Calu3 (cell line): ENCODE measurements at regions of chrX and their contacts with region 1.

Region 1: GRCh38 chrX:124388562-124388961 is 42.2 kb downstream of the SH2D1A start:
- DNase-seq: peak; percentile 60
- H3K4me3 Mint-ChIP-seq: no peak overlapping the region
- H3K27ac Mint-ChIP-seq: no peak overlapping the region
- H3K4me1 Mint-ChIP-seq: no peaks in the 10 kb centered on the region
- H3K27me3 Mint-ChIP-seq: peaks cover 9% of the 10 kb centered on the region
- CTCF ChIP-seq: peak; percentile 58

Region 2: GRCh38 chrX:124426288-124427169 is 38.0 kb after region 1 on chrX:
- CTCF ChIA-PET with region 1: no interaction called
- intact Hi-C with region 1: no loop called
- DNase-seq: no peak
- H3K4me3 Mint-ChIP-seq: no peak overlapping the region
- H3K27ac Mint-ChIP-seq: no peak overlapping the region
- H3K4me1 Mint-ChIP-seq: peaks cover 10% of the 10 kb centered on the region
- H3K27me3 Mint-ChIP-seq: no peaks in the 10 kb centered on the region
- CTCF ChIP-seq: no peak

Region 3: GRCh38 chrX:125132285-125132684 is 743.7 kb after region 1 on chrX:
- CTCF ChIA-PET with region 1: no interaction called
- intact Hi-C with region 1: loop called (anchors 1 kb)
- DNase-seq: no peak
- H3K4me3 Mint-ChIP-seq: no peak overlapping the region
- H3K27ac Mint-ChIP-seq: no peak overlapping the region
- H3K4me1 Mint-ChIP-seq: no peaks in the 10 kb centered on the region
- H3K27me3 Mint-ChIP-seq: no peaks in the 10 kb centered on the region
- CTCF ChIP-seq: no peak